Common myeloid progenitor, CD34-positive (primary cell): ENCODE measurements at regions of chr22 and their contacts with region 1.

Region 1: GRCh38 chr22:40525249-40525884 is 111.2 kb downstream of the MRTFA start:
- DNase-seq: peak; percentile 68 to 87 (median 85)
- H3K4me3 ChIP-seq: no peak overlapping the region
- H3K27ac ChIP-seq: no peak overlapping the region
- H3K4me1 ChIP-seq: no peaks in the 10 kb centered on the region
- H3K27me3 ChIP-seq: no peaks in the 10 kb centered on the region

Region 2: GRCh38 chr22:40512426-40513136 is 12.8 kb before region 1 on chr22:
- CTCF ChIA-PET with region 1: interaction called, 11 read pairs
- POLR2A ChIA-PET with region 1: no interaction called
- DNase-seq: no peak
- H3K4me3 ChIP-seq: no peak overlapping the region
- H3K27ac ChIP-seq: no peak overlapping the region
- H3K4me1 ChIP-seq: peaks cover 13 to 23% (median 23%) of the 10 kb centered on the region in 4 experiments
- H3K27me3 ChIP-seq: no peaks in the 10 kb centered on the region

Region 3: GRCh38 chr22:40641269-40641668 is 115.9 kb after region 1 on chr22:
- CTCF ChIA-PET with region 1: interaction called, 106 read pairs
- POLR2A ChIA-PET with region 1: interaction called, 7 read pairs
- DNase-seq: no peak
- H3K4me3 ChIP-seq: no peak overlapping the region
- H3K27ac ChIP-seq: no peak overlapping the region
- H3K4me1 ChIP-seq: peaks cover 0 to 18% (median 12%) of the 10 kb centered on the region in 4 experiments
- H3K27me3 ChIP-seq: no peaks in the 10 kb centered on the region

Region 4: GRCh38 chr22:40651057-40651456 is 125.7 kb after region 1 on chr22:
- CTCF ChIA-PET with region 1: interaction called, 106 read pairs
- POLR2A ChIA-PET with region 1: interaction called, 4 read pairs
- DNase-seq: no peak
- H3K4me3 ChIP-seq: peak overlapping the region in 1 of 7 experiments; percentile 75
- H3K27ac ChIP-seq: peak overlapping the region in 1 of 2 experiments; percentile 74
- H3K4me1 ChIP-seq: peaks cover 0 to 24% (median 9%) of the 10 kb centered on the region in 4 experiments
- H3K27me3 ChIP-seq: no peaks in the 10 kb centered on the region